ENCODE measurements at regions of chr2 and their contacts with region 1.

Region 1: GRCh38 chr2:3651691-3652648 is 6.0 kb upstream of the ALLC start:
- DNase-seq: peak; percentile 84
- H3K4me3 Mint-ChIP-seq: peak overlapping the region; percentile 78
- H3K27ac Mint-ChIP-seq: peak overlapping the region; percentile 84
- H3K4me1 Mint-ChIP-seq: peaks cover 12% of the 10 kb centered on the region
- H3K27me3 Mint-ChIP-seq: peaks cover 4% of the 10 kb centered on the region

Region 2: DNA sequence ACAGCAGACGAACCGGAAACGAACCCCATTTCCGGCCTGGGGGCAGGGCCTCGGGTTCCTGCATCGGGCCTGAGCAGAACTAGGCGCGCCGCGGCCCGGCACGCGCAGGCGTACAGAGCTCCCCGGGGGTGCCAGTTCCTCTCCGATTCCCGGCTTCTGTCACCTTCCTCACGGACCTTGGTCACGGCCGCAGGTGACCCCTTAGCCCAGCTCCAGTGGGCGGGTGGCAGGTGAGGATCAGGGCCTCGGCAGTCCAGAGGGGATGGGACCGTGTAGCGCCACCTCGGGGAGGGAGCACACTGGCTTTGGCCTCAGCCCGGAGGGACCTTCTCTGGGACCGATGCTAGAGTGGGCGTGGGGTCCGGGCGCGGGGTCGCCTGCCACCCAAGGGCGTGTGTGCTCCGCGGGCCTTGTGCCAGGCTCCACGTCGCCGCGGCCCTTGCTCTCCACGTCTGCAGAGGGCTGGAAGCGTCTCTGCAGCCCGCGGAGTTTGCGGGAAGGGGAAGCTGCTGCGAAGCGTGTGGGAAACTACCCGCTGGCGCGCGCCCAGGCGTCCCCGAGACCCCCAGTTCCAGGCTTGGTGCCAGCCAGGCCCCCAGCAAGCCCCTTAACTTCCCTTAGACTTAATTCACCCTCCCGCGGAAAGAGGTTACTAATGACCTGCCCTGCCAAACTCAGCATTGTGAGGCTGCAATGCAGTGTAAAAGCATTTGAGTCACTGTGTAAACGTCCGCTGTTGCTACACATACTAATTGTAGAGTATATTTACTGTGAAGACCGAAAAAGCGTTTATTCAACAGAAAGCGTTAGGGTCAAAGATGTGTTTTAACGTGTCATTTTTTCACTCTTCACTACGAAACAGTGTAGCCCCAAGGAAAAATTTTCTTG is 272.1 kb before region 1 on chr2 and contains the start of gene TRAPPC12:
- CTCF ChIA-PET with region 1: interaction called, 7 read pairs
- POLR2A ChIA-PET with region 1: interaction called, 3 read pairs
- intact Hi-C with region 1: loop called (anchors 2 kb)
- DNase-seq: peak; percentile 95
- H3K4me3 Mint-ChIP-seq: peak within 1 kb of the TSS; percentile 98
- H3K27ac Mint-ChIP-seq: peak within 1 kb of the TSS; percentile 97
- H3K4me1 Mint-ChIP-seq: peaks cover 39% of the 10 kb centered on the region
- H3K27me3 Mint-ChIP-seq: no peaks in the 10 kb centered on the region
- total RNA-seq, gene TRAPPC12: 61.4 to 64.3 TPM

Region 3: DNA sequence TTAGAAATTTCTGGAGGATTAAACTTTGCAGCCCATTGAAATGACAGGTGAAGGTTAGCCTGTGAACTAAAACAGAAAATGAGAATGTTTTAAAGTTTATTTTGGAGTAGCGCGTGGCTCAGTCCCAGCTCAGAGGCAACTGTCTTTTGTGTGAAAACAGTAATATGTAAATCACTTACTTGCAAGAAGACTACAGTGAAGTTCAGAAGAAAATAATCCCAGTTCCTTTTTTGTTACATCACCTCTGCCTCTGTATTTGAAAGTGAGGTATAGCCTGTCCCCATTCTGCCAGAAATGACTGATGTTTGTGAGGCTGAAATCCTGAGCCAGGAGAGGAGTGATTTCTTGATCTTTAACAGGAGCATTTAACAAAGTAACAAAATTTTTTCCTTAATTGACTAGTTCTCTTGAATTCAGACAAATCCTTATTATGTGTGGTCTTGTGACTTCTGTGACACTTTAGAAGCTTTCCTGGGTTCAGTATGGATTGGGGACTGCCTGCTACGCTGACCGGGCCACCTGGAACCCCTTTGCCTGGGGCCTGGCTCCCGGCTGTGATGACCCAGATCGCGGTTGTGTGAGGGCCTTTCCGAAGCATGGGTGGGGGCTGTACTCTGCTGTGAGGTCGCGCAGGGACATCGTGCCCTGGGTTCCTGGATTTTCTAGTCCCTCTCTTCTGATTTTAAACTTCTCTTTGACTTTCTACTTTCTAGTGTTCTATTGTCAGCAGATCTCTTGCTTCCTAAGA is 248.2 kb before region 1 on chr2:
- CTCF ChIA-PET with region 1: no interaction called
- POLR2A ChIA-PET with region 1: no interaction called
- intact Hi-C with region 1: no loop called
- DNase-seq: no peak
- H3K4me3 Mint-ChIP-seq: no peak overlapping the region
- H3K27ac Mint-ChIP-seq: peak overlapping the region; percentile 42
- H3K4me1 Mint-ChIP-seq: peaks cover 14% of the 10 kb centered on the region
- H3K27me3 Mint-ChIP-seq: no peaks in the 10 kb centered on the region

Region 4: DNA sequence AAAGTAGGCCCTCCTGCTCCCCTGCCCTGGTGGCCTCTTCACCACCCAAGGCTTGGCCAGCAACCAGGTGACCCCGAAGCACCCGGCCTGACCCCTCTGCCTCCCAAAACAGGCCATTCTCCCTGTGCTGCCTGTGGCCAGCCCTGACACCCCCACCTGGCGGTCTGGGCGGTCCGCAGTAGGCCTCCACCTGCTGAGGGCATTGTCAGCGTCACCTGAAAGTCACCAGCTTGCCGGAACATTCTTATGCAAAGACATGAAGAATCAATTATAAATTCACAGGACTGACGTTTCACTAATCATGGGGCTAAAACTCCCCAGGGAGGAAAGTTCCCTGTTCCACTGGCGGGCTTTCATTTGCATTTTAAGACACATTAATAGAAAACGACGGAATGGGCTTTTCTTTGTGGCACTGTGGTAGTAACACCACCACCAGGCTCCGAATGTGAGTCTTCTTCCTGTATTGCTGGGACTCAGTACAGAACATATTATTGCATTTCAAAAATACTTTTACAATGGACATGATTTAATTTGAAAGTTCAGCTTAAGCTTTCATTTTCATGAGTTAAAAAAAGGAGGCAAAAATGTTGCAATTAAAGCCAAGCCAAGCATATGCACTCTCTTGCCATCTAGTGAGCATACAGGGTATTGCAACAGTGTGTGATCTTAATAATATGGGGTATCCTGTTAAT is 190.0 kb before region 1 on chr2:
- CTCF ChIA-PET with region 1: interaction called, 14 read pairs
- POLR2A ChIA-PET with region 1: no interaction called
- intact Hi-C with region 1: no loop called
- DNase-seq: no peak
- H3K4me3 Mint-ChIP-seq: no peak overlapping the region
- H3K27ac Mint-ChIP-seq: peak overlapping the region; percentile 69
- H3K4me1 Mint-ChIP-seq: peaks cover 8% of the 10 kb centered on the region
- H3K27me3 Mint-ChIP-seq: no peaks in the 10 kb centered on the region

Region 5: GRCh38 chr2:3558205-3559014 is 93.6 kb before region 1 on chr2 and contains the start of gene RNASEH1:
- CTCF ChIA-PET with region 1: interaction called, 9 read pairs
- POLR2A ChIA-PET with region 1: interaction called, 17 read pairs
- intact Hi-C with region 1: loop called (anchors 1 kb)
- DNase-seq: peak; percentile 99
- H3K4me3 Mint-ChIP-seq: peak within 1 kb of the TSS; percentile 86
- H3K27ac Mint-ChIP-seq: peak within 1 kb of the TSS; percentile 93
- H3K4me1 Mint-ChIP-seq: peaks cover 30% of the 10 kb centered on the region
- H3K27me3 Mint-ChIP-seq: no peaks in the 10 kb centered on the region
- total RNA-seq, gene RNASEH1: 23.6 to 24.8 TPM

Region 6: DNA sequence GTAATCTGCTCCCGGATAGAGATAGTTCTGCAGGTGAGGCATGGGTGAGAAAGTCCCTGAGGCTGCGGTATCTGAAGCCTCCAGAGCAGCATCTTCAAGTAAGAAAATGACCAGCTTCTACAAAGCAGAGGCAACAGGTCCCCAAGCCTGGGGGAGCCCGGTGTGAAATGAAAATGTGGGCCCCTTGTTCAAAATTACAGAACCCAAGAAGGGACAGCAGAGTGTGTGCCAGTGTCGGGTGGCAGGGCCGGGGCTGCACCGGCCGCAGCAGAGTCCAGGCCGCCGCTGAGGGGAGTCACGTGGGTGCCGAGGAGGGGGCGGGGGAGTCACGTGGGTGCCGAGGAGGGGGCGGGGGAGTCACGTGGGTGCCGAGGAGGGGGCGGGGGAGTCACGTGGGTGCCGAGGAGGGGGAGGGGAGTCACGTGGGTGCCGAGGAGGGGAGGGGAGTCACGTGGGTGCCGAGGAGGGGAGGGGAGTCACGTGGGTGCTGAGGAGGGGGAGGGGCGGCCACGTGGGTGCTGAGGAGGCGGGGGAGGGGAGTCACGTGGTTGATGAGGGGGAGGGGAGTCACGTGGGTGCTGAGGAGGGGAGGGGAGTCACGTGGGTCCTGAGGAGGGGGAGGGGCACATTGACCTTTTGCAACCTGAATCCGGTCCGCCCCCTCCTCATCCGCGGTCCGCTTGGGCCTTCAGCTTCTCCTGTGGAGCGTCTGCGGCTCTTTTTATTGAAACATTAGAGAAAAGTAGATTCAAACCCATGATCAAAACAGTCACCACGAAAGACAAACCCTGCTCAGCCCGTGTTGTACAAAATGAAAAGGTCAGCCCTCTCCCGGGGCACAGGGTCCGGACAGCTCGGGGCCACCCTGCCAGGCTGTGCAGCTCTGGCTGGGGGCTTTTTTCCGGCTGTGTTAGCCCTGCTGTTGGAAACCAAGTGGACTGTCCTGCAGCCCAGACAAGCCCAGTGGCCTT is 46.7 kb before region 1 on chr2:
- CTCF ChIA-PET with region 1: interaction called, 3 read pairs
- POLR2A ChIA-PET with region 1: no interaction called
- intact Hi-C with region 1: loop called (anchors 1 kb)
- DNase-seq: peak; percentile 77
- H3K4me3 Mint-ChIP-seq: peak overlapping the region; percentile 66
- H3K27ac Mint-ChIP-seq: peak overlapping the region; percentile 71
- H3K4me1 Mint-ChIP-seq: peaks cover 12% of the 10 kb centered on the region
- H3K27me3 Mint-ChIP-seq: no peaks in the 10 kb centered on the region

Region 7: GRCh38 chr2:3780477-3781402 is 128.8 kb after region 1 on chr2:
- CTCF ChIA-PET with region 1: no interaction called
- POLR2A ChIA-PET with region 1: no interaction called
- intact Hi-C with region 1: loop called (anchors 5 kb)
- DNase-seq: peak; percentile 81
- H3K4me3 Mint-ChIP-seq: no peak overlapping the region
- H3K27ac Mint-ChIP-seq: no peak overlapping the region
- H3K4me1 Mint-ChIP-seq: peaks cover 10% of the 10 kb centered on the region
- H3K27me3 Mint-ChIP-seq: peaks cover 7% of the 10 kb centered on the region

Measured in activated CD4-positive, alpha-beta memory T cell treated with anti-CD3 and anti-CD28 coated beads for 36 hours (primary cell).